Right lobe of liver (tissue), 6 donors: ENCODE measurements at regions of chr11 and their contacts with region 1.

Region 1: GRCh38 chr11:74443071-74443864 is 24.1 kb downstream of the KCNE3 start:
- DNase-seq: peak; percentile 35 to 74 (median 61)
- ATAC-seq: peak; percentile 98 to 100 (median 98)
- H3K4me3 ChIP-seq: no peak overlapping the region
- H3K27ac ChIP-seq: no peak overlapping the region
- H3K4me1 ChIP-seq: peaks cover 0 to 7% (median 4%) of the 10 kb centered on the region in 4 donors
- H3K27me3 ChIP-seq: no peaks in the 10 kb centered on the region
- CTCF ChIP-seq: peak; percentile 35 to 50 (median 42)
- POLR2A ChIP-seq: no peak

Region 2: DNA sequence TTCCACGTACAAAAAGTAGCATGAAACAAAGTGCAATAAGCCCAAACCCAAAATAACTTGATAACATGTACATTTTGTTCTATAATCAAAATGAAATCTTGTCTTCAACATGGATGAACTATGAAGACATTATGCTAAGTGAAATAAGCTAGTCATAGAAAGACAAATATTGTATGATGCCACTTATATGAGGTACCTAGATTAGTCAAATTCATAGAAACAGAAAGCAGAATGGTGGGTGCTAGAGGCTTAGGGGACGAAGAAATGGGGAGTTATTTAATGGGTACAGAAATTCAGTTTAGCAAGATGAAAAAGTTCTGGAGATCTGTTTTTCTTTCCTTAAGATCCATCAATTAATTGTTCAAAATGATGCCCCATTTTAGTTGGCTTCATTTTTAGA is 52.6 kb before region 1 on chr11:
- intact Hi-C with region 1: loop called in 1 of 2 experiments (anchors 5 kb)
- DNase-seq: no peak
- ATAC-seq: no peak
- H3K4me3 ChIP-seq: no peak overlapping the region
- H3K27ac ChIP-seq: no peak overlapping the region
- H3K4me1 ChIP-seq: no peaks in the 10 kb centered on the region
- H3K27me3 ChIP-seq: no peaks in the 10 kb centered on the region
- CTCF ChIP-seq: no peak
- POLR2A ChIP-seq: no peak

Region 3: DNA sequence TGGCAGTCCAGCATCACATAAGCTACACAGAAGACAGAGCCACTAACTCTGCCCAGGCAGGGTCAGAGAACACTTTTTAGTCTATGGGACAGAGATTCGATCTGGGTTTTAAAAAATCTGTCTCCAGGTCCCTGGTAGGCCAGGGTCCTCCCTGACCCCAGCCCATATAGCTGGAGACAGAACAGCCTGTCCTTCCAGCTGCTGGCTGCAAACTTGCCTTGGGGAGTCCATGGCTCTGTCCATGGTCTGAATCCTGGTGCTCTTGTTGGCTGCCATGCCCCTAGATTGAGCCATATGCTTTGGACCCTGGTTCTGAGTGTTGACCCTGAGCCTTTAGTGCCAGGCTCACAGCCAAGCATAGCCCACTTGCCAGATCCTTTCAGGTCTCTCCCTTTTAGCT is 63.6 kb after region 1 on chr11:
- intact Hi-C with region 1: no loop called
- DNase-seq: no peak
- ATAC-seq: no peak
- H3K4me3 ChIP-seq: no peak overlapping the region
- H3K27ac ChIP-seq: no peak overlapping the region
- H3K4me1 ChIP-seq: no peaks in the 10 kb centered on the region
- H3K27me3 ChIP-seq: no peaks in the 10 kb centered on the region
- CTCF ChIP-seq: no peak
- POLR2A ChIP-seq: no peak